Panc1 (cell line): ENCODE measurements at regions of chr11 and their contacts with region 1.

Region 1: DNA sequence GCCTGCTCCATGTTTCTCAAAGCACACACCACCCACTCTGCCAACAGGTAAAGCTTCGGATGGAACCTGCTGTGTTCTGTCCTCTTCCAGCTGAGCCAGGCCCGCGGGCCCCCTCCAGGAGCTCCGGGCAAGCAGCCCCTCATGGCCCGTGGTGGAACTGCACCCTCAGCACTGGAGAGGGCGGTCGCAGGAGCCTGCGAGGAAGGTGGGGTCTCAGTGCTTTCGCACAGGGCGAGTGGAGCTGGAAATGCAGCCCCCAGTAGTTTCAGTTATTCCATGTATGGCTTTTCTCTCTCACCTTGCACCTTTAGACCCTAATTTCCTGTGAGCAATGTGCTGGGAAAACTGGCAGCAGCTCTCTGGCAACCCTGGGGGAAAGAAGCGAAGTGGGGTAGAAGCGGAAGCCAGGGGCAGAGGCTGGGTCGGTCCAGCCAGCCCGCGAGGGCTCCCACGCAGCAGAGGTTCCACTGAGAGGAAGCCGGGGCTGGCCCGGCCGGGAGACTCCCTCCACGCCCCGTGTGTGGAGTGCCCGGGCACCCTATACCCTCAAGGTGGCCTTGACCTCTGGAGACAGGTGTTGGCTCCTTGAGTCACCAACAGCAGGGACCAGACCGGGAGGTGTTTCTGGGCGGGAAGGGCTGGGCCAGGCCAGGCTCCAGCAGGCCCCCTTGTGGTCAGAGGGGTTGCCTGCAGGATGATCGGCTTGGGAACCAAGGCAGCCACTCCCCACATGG is 119.9 kb upstream of the TMEM45B start:
- DNase-seq: peak; percentile 18
- ATAC-seq: peak; percentile 84
- H3K4me3 ChIP-seq: peak overlapping the region in 1 of 2 experiments; percentile 30; a peak in 1 of 4 replicates
- H3K27ac ChIP-seq: no peak overlapping the region
- H3K4me1 ChIP-seq: peaks cover 6% of the 10 kb centered on the region; the same call in 1 of the 2 replicates
- H3K27me3 ChIP-seq: no peaks in the 10 kb centered on the region
- CTCF ChIP-seq: peak; percentile 89

Region 2: GRCh38 chr11:129375751-129376657 is 319.7 kb before region 1 on chr11 and contains the start of gene BARX2:
- CTCF ChIA-PET with region 1: interaction called, 8 read pairs
- POLR2A ChIA-PET with region 1: no interaction called
- in situ Hi-C with region 1: no loop called
- intact Hi-C with region 1: loop called (anchors 5 kb)
- DNase-seq: peak; percentile 35
- ATAC-seq: peak; percentile 86
- H3K4me3 ChIP-seq: peak within 1 kb of the TSS; percentile 51 to 62
- H3K27ac ChIP-seq: peak within 1 kb of the TSS; percentile 77
- H3K4me1 ChIP-seq: peaks cover 18% of the 10 kb centered on the region
- H3K27me3 ChIP-seq: peaks cover 32% of the 10 kb centered on the region
- CTCF ChIP-seq: peak; percentile 93
- total RNA-seq, gene BARX2: 3.9 TPM

Region 3: DNA sequence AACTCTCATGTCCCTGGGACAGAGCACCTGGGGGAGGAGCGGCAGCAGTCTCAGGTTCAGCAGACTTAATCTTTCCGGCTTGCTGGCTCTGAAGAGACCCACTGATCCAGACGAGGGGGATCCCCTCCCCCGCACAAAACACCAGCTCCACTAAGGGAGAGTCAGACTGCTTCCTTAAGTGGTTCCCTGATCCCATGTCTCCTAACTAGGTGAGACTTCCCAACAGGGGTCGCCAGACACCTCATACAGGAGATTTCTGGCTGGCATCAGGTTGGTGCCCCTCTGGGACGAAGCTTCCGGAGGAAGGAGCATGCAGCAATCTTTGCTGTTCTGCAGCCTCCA is 37.2 kb before region 1 on chr11:
- CTCF ChIA-PET with region 1: no interaction called
- POLR2A ChIA-PET with region 1: interaction called, 11 read pairs
- in situ Hi-C with region 1: no loop called
- intact Hi-C with region 1: no loop called
- DNase-seq: no peak
- ATAC-seq: no peak
- H3K4me3 ChIP-seq: no peak overlapping the region
- H3K27ac ChIP-seq: no peak overlapping the region
- H3K4me1 ChIP-seq: no peaks in the 10 kb centered on the region
- H3K27me3 ChIP-seq: no peaks in the 10 kb centered on the region
- CTCF ChIP-seq: peak; percentile 25; the same call in 1 of the 2 replicates

Region 4: DNA sequence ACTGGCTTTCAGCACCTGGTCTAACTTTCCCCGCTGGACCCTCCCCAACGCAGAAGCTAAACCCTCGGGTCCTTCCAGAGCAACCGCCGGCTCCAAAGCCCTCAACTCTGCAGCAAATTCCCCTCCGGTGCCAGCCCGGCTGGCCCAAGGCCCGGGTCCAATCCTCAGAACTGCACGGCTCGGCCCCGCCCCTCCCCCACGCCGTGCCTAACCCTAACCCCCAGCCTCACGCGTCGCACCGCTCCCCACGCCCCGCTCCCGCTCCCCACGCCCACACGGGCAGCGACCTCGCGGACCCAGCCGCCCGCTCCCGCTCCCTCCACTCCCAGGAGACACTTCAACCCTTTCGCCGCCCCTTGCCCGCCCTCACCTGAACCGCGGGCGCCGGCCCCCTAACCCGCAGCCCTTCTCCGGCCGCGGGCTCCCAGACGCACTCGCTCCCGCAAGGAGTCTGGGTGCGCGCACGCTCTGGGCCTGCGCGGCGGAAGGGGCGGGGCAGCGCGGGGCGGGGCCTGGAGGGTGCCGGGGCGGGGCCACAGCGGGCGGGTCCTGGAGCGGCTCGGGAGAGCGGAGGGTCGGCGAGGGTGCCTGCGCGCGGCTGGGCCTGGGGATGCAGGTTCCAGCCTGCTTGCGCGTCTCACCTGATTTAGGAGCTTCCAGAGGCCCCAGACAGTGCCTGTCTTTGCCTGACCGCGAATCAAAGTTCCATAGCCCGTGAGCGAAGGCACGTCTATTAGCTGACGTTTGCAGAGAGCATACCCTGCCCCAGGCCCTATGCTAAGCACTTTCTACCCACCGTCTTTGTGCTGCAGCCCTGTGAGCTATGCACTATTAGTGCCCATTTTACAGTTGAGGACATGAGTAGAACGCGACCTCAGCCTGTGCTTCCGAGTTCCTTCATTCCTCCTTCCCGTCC is 199.6 kb after region 1 on chr11 and contains the start of gene NFRKB:
- CTCF ChIA-PET with region 1: no interaction called
- POLR2A ChIA-PET with region 1: no interaction called
- in situ Hi-C with region 1: no loop called
- intact Hi-C with region 1: no loop called
- DNase-seq: no peak
- ATAC-seq: peak; percentile 98
- H3K4me3 ChIP-seq: peak within 1 kb of the TSS; percentile 81 to 98
- H3K27ac ChIP-seq: peak within 1 kb of the TSS; percentile 86
- H3K4me1 ChIP-seq: peaks cover 14% of the 10 kb centered on the region
- H3K27me3 ChIP-seq: no peaks in the 10 kb centered on the region
- CTCF ChIP-seq: no peak
- total RNA-seq, gene NFRKB: 58.8 TPM